Activated naive CD4-positive, alpha-beta T cell treated with anti-CD3 and anti-CD28 coated beads for 36 hours (primary cell): ENCODE measurements at regions of chr1 and their contacts with region 1.

Region 1: DNA sequence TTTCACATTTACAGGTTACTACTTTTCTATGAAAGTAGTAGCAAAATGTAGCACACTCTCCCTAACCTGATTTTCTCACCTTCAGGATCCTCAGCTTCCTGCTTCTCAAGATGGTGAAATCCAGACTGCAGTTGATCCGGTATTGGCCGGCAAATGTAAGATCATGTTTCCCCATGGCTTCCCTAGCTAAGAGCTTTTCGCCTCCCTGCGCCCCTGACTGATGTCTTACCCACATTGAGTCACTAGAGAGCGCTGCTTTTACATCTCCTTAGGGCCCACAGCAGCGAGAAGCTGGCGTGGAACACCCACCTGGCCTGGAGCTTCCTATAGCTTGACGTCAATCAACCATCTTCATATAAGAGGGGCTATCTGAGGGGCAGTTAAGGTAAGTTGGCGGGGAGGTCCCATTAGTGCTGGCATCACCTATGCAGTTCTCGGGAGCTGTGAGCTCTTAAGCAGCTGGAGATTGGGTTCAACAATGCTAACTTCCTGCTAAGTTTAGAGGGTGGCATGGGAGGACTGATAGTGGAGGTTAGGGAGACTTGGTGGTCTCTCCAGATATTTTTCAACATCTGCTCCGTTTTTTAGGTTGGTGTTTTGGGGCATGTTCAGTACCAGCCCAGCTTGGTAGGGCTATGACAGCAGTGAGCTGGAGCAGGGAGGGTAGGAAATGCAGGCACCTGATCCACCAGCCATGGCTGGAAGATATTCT is 5.5 kb downstream of the PTPN7 start:
- DNase-seq: peak; percentile 64
- H3K4me3 Mint-ChIP-seq: no peak overlapping the region
- H3K27ac Mint-ChIP-seq: peak overlapping the region; percentile 44
- H3K4me1 Mint-ChIP-seq: peaks cover 45% of the 10 kb centered on the region
- H3K27me3 Mint-ChIP-seq: no peaks in the 10 kb centered on the region

Region 2: DNA sequence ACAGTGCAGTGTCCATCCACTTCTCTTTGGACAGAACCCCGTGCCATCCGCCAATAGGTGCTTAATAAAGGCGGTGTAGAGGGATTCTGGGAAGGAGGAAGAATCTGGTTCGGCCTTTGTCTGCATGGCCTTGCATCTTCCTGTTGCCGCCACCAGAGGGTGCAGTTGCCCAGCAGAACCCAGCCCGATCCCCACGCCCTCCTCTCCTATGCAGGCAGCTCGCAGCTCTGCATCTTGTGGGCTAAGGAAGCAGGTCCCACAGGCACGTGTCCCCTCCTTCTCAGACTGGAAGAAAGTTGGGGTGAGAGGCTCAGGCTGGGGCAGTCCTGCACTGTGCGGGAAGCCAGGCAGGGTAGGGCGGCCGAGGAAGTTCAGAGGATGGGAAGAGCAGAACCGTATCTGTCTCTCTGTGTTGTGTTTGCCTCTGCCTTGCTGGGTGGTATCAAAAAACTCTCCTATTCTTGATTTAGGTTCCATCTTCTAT is 595.2 kb before region 1 on chr1:
- CTCF ChIA-PET with region 1: no interaction called
- intact Hi-C with region 1: no loop called
- DNase-seq: peak; percentile 80
- H3K4me3 Mint-ChIP-seq: no peak overlapping the region
- H3K27ac Mint-ChIP-seq: no peak overlapping the region
- H3K4me1 Mint-ChIP-seq: peaks cover 3% of the 10 kb centered on the region
- H3K27me3 Mint-ChIP-seq: no peaks in the 10 kb centered on the region

Region 3: GRCh38 chr1:202135221-202135721 is 19.7 kb before region 1 on chr1:
- CTCF ChIA-PET with region 1: interaction called, 18 read pairs
- intact Hi-C with region 1: no loop called
- DNase-seq: peak; percentile 61
- H3K4me3 Mint-ChIP-seq: no peak overlapping the region
- H3K27ac Mint-ChIP-seq: no peak overlapping the region
- H3K4me1 Mint-ChIP-seq: no peaks in the 10 kb centered on the region
- H3K27me3 Mint-ChIP-seq: no peaks in the 10 kb centered on the region

Region 4: DNA sequence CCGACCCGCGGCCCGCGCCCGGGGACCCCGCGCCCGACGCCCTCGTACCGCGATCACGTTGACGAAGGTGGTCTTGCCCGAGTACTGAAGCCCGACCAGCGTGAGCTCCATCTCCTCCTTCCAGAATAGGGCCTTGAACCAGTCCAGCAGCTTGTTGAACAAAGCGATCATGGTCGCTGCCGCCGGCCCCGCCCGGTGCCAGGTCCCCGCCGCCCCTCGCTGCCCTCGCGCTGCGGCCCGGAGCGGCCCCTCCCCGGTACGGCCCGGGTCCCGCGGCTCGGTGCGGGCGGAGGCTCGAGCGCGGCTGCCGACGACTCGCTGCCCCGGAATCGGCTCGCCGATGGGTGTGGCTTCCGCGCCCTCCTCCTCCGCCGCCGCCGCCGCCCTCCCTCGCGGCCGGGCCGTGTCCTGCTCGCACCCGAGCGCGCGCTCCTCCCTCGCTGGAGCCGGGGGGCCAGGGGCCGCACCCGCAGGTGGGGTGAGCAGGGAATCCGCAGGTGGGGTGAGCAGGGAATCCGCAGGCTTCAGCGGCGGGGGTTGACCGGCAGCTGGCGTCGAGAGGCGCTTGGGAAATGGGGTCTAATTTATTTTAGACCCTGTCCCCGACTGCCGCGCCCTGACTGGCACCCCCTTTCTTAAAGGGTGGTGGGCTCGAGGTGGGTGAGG is 10.4 kb before region 1 on chr1 and contains the start of gene ARL8A:
- CTCF ChIA-PET with region 1: interaction called, 15 read pairs
- intact Hi-C with region 1: loop called (anchors 1 kb)
- DNase-seq: peak; percentile 74
- H3K4me3 Mint-ChIP-seq: peak within 1 kb of the TSS; percentile 91
- H3K27ac Mint-ChIP-seq: peak within 1 kb of the TSS; percentile 88
- H3K4me1 Mint-ChIP-seq: peaks cover 23% of the 10 kb centered on the region
- H3K27me3 Mint-ChIP-seq: no peaks in the 10 kb centered on the region
- total RNA-seq, gene ARL8A: 28.1 to 30.6 TPM

Region 5: GRCh38 chr1:202192770-202193613 is 38.1 kb after region 1 on chr1:
- CTCF ChIA-PET with region 1: interaction called, 14 read pairs
- intact Hi-C with region 1: no loop called
- DNase-seq: peak; percentile 71
- H3K4me3 Mint-ChIP-seq: no peak overlapping the region
- H3K27ac Mint-ChIP-seq: no peak overlapping the region
- H3K4me1 Mint-ChIP-seq: peaks cover 2% of the 10 kb centered on the region
- H3K27me3 Mint-ChIP-seq: peaks cover 25% of the 10 kb centered on the region